ENCODE measurements at regions of chr15 and their contacts with region 1.

Region 1: DNA sequence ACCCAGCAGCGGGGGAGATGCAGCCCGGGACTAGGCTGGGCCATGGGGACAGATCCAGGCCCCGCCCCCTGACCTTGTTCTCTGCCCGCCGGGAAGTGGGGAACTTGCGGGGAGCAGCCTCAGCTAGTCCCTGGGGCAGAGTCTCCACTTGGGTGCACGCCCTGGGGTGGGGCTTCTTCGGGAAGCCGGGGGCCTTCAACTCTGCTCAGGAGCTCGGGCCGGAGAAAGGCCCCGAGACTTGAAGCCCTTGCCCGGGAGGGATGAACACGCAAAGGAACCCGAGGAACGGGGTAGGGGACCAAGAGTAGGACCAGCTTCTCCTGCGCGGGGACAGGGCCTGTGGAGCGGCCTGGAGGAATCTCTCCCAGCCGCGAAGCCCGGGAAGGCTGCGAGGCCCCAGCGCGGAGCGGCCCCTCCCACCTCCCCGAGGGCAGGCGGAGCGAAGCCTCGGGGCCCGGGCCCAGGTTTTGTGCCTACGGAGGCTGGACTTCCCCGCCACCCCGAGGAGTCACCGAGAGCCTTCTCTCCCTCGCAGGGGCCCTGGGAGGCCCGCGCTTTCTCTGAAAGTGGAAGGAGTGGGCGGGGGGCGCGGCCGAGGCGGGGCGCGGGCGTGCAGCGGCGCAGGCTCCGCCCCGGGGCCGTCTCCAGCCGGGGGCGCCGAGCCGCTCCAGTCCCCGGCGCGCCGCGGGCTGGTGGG is at the start of gene ITPKA:
- DNase-seq: peak; percentile 97
- ATAC-seq: peak; percentile 85
- H3K4me3 Mint-ChIP-seq: peak within 1 kb of the TSS; percentile 58
- H3K27ac Mint-ChIP-seq: peak within 1 kb of the TSS; percentile 37
- H3K4me1 Mint-ChIP-seq: peaks cover 38% of the 10 kb centered on the region
- H3K27me3 Mint-ChIP-seq: peaks cover 40% of the 10 kb centered on the region
- total RNA-seq, gene ITPKA: 2.5 to 4.2 TPM

Region 2: GRCh38 chr15:40807028-40807887 is 686.1 kb before region 1 on chr15 and contains the starts of genes DNAJC17 and ZFYVE19:
- CTCF ChIA-PET with region 1: no interaction called
- POLR2A ChIA-PET with region 1: no interaction called
- intact Hi-C with region 1: loop called in 1 of 2 experiments (anchors 1 kb)
- DNase-seq: peak; percentile 97
- ATAC-seq: peak; percentile 98
- H3K4me3 Mint-ChIP-seq: peak within 1 kb of the TSS; percentile 91
- H3K27ac Mint-ChIP-seq: peak within 1 kb of the TSS; percentile 96
- H3K4me1 Mint-ChIP-seq: peaks cover 19% of the 10 kb centered on the region
- H3K27me3 Mint-ChIP-seq: no peaks in the 10 kb centered on the region
- total RNA-seq, gene DNAJC17: 41.5 to 43.6 TPM
- total RNA-seq, gene ZFYVE19: 27.5 to 33.7 TPM

Region 3: DNA sequence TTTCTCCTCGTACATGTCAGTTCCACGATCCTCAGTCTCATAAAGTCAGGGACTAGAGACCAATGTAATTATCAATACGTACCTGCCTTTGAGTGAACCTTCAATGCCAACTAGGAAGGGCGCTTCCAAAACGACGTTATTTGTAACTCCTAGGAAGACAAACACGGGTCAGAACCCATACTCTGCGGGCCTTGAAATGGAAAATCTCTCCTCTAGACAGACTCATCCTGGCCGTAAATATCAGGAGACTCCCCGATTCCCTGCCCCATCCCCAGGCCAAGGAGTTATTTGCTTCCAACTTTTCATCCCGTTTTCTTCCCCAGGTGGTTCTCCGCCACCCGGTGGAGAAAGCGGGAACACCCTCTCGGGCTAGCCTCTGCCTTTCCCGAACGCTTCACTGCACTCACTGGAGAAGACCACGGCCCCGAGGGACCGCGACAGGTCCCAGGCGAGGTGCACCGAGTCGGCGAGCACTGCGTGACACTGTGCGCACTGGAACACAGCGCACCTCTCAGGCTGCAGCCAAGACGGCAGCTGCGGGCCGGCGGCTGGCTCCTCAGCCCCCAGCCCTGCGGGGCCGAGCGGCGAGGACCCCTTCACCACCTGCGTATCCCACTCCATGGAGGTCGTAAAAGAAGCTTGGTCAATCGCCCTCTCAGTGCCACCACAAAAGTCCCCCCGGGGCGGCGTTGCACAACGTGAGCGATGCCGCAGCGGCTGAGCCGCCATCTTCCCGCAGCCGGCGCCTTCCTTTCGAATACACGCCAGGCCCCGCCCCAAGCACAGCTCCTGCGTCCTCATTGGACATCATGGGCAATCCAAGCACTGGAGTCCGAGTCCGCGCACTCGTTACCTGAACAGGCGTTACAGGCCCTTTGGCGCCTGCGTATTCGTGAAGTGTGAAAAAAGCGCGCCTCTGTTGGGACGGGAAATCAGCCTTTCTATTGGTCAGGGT is 161.2 kb before region 1 on chr15 and contains the start of gene OIP5:
- CTCF ChIA-PET with region 1: no interaction called
- POLR2A ChIA-PET with region 1: no interaction called
- intact Hi-C with region 1: loop called in 1 of 2 experiments (anchors 2 kb)
- DNase-seq: peak; percentile 99
- ATAC-seq: peak; percentile 98
- H3K4me3 Mint-ChIP-seq: peak within 1 kb of the TSS; percentile 91
- H3K27ac Mint-ChIP-seq: peak within 1 kb of the TSS; percentile 92
- H3K4me1 Mint-ChIP-seq: peaks cover 26% of the 10 kb centered on the region
- H3K27me3 Mint-ChIP-seq: no peaks in the 10 kb centered on the region
- total RNA-seq, gene OIP5: 11.5 to 14.0 TPM

Region 4: GRCh38 chr15:41465822-41466421 is 27.4 kb before region 1 on chr15:
- CTCF ChIA-PET with region 1: interaction called, 11 read pairs
- POLR2A ChIA-PET with region 1: no interaction called
- intact Hi-C with region 1: no loop called
- DNase-seq: peak; percentile 34
- ATAC-seq: peak; percentile 81
- H3K4me3 Mint-ChIP-seq: no peak overlapping the region
- H3K27ac Mint-ChIP-seq: no peak overlapping the region
- H3K4me1 Mint-ChIP-seq: no peaks in the 10 kb centered on the region
- H3K27me3 Mint-ChIP-seq: no peaks in the 10 kb centered on the region

Region 5: GRCh38 chr15:41621200-41622193 is 128.1 kb after region 1 on chr15:
- CTCF ChIA-PET with region 1: no interaction called
- POLR2A ChIA-PET with region 1: no interaction called
- intact Hi-C with region 1: loop called in 1 of 2 experiments (anchors 2 kb)
- DNase-seq: peak; percentile 91
- ATAC-seq: peak; percentile 90
- H3K4me3 Mint-ChIP-seq: peak overlapping the region; percentile 70
- H3K27ac Mint-ChIP-seq: peak overlapping the region; percentile 76
- H3K4me1 Mint-ChIP-seq: peaks cover 11% of the 10 kb centered on the region
- H3K27me3 Mint-ChIP-seq: no peaks in the 10 kb centered on the region

Region 6: DNA sequence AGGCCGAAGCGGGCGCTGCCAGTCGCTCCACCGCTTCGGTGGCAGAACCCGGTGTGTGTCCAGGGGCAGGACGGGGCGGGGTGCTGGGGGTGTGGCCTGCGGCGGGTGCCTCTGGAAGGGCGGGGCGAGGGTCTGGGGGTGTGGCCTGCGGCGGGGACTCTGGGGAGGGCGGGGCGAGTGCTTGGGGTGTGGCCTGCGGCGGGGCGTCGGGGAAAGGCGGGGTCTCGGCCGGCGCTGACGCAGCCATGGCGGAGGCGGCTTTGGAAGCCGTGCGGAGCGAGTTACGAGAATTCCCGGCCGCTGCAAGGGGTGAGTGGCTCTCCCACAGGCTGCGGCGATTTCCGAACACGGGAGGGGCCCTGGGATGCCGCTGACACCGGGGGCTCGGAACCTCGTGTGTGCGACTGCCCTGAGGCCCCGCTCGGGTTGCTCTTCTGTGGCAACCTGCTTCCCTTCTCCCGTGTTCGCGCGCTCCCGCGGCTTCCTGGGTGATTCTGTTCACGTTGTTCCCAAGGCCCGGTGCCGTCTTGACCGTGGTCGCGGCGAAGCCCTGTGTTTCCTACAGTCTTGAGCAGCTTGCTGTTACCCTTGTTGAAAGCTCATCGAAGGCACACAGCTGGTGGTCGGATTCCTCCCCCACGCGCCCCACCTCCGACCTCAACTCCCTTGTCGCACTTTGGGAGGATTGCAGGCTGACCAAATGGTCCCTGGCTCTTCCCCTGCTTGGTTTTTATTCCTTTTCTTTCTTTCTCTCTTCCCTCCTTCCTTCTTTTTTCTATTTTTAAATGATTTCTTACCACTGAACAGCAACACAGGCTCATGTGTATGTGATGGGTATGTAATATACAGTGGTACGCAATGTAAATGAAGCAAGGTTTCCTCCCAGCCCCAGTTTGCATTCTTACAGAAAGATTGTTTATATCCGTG is 334.8 kb after region 1 on chr15 and contains the start of gene JMJD7:
- CTCF ChIA-PET with region 1: no interaction called
- POLR2A ChIA-PET with region 1: no interaction called
- intact Hi-C with region 1: loop called in 1 of 2 experiments (anchors 1 kb)
- DNase-seq: peak; percentile 99
- ATAC-seq: peak; percentile 96
- H3K4me3 Mint-ChIP-seq: peak within 1 kb of the TSS; percentile 80
- H3K27ac Mint-ChIP-seq: peak within 1 kb of the TSS; percentile 69
- H3K4me1 Mint-ChIP-seq: peaks cover 41% of the 10 kb centered on the region
- H3K27me3 Mint-ChIP-seq: no peaks in the 10 kb centered on the region
- total RNA-seq, gene JMJD7: 17.1 to 17.6 TPM

Region 7: DNA sequence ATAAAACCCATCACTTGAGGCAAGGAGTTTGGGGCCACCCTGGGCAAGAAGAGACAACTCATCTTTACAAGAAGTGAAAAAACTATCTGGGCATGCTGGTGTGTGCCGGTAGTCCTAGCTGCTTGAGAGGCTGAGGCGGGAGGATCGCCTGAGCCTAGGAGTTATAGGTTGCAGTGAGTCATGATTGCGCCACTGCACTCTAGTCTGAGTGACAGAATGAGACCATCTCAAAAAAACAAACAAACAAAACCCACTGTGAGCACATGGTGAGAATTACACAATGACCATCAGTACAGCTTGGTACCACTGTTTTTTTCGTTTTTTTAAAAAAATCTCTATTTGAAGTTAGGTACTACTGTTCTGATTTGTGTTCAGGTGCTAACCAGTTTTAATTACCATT is 701.1 kb after region 1 on chr15:
- CTCF ChIA-PET with region 1: no interaction called
- POLR2A ChIA-PET with region 1: no interaction called
- intact Hi-C with region 1: loop called in 1 of 2 experiments (anchors 5 kb)
- DNase-seq: peak; percentile 37
- ATAC-seq: peak; percentile 24
- H3K4me3 Mint-ChIP-seq: no peak overlapping the region
- H3K27ac Mint-ChIP-seq: peak overlapping the region; percentile 93
- H3K4me1 Mint-ChIP-seq: peaks cover 55% of the 10 kb centered on the region
- H3K27me3 Mint-ChIP-seq: no peaks in the 10 kb centered on the region